Heart right ventricle (tissue), 16 donors: ENCODE measurements at regions of chr7 and their contacts with region 1.

Region 1: DNA sequence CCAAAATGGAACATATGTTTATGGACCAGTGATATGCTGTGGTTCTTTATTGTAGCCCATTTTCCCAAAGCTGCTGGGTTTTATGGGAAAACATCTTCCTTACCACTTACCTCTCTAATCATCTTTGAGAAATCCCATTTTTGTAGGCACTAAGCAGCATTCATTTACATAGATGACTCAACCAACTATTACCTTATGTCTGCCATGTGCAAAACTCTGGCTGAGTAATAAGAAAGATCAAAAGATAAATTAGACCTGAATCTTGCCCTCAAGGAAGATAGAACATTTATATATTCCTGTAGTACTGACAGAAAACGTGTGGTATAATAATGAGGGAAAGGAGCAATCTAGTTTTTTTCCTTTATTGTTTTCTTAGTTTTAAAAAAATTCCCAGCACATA is 24.3 kb downstream of the CBLL1 start:
- DNase-seq: no peak
- ATAC-seq: no peak
- H3K4me3 ChIP-seq: no peak overlapping the region
- H3K27ac ChIP-seq: no peak overlapping the region
- H3K4me1 ChIP-seq: no peaks in the 10 kb centered on the region
- H3K27me3 ChIP-seq: no peaks in the 10 kb centered on the region
- CTCF ChIP-seq: no peak

Region 2: GRCh38 chr7:107846324-107846723 is 78.1 kb after region 1 on chr7:
- intact Hi-C with region 1: no loop called
- DNase-seq: no peak
- ATAC-seq: peak in 1 of 8 donors; percentile 44
- H3K4me3 ChIP-seq: no peak overlapping the region
- H3K27ac ChIP-seq: no peak overlapping the region
- H3K4me1 ChIP-seq: peaks cover 0 to 15% (median 0%) of the 10 kb centered on the region in 9 donors
- H3K27me3 ChIP-seq: no peaks in the 10 kb centered on the region
- CTCF ChIP-seq: no peak

Region 3: DNA sequence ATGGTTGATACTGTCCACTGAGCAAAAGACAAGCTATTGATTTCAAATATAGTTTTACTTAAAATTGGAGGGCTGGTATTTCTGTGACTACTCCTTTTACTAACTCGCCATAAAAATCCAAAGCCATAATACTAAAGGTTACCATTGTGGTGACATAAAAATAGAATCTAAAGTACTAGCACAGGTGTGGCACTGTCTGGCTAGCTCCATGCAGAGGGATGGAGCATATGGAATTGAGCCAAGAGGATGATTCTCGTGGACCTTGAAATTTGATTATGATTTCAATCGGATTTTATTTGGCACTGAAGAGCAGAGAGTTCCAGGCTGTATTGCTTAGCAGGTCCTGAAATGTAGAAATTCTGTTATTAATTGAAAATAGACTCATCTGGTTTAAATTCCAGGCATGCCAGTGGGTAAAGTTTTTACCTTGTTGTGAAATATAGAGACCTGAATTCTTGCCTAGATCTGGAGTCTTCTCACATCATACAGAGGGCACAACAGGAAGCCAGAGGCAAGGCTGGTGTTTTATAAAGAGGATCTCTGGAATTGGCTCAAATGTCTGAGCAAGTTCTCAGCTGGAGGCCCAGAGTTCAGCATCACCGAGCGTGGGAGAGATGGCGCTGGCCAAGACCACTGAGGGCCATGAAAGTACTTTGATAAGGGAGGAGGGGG is 92.8 kb after region 1 on chr7:
- intact Hi-C with region 1: loop called in 1 of 10 experiments (anchors 10 kb)
- DNase-seq: no peak
- ATAC-seq: no peak
- H3K4me3 ChIP-seq: no peak overlapping the region
- H3K27ac ChIP-seq: no peak overlapping the region
- H3K4me1 ChIP-seq: peaks cover 0 to 9% (median 0%) of the 10 kb centered on the region in 9 donors
- H3K27me3 ChIP-seq: no peaks in the 10 kb centered on the region
- CTCF ChIP-seq: no peak